B cell (primary cell): ENCODE measurements at regions of chr16 and their contacts with region 1.

Region 1: DNA sequence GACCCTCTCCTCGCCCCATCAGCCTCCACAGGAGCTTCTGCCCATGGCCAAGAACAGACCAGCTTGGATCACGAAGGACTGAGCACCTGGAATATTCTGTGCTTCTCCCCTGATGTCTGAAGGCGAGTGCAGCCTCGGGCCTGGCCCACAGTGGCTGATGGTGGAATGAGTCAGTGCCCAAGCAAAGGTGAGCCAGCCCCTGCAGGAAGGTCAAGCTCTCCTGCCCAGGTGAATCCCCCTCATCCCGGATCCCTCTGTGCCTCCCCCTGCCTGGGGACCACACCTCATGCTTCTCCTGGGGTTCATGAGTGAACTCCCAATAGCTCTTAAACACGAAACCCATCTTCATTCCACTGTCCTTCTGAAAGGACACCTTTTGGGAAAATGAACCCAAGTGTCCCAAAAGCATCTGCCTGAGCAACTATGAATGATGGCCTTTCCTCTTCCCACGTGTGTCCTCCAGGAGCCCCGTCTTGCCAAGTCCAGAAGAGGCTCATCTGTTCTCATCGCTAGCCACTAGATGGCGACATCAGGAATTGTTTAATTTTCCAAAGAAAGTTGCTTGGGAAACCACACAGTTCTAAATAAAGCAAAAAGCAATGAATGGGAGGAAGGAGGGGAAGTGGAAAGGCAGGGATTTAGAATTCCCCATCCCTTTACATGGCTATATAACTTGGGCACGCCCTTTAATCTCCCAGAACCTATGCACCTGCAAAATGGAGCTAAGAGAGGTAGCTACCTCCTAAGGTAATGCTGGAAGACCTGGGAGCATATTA is 9.2 kb upstream of the CDH5 start:
- DNase-seq: peak; percentile 41
- ATAC-seq: no peak
- H3K4me3 ChIP-seq: no peak overlapping the region
- H3K4me3 Mint-ChIP-seq: no peak overlapping the region
- H3K27ac ChIP-seq: no peak overlapping the region
- H3K27ac Mint-ChIP-seq: no peak overlapping the region
- H3K4me1 ChIP-seq: no peaks in the 10 kb centered on the region
- H3K4me1 Mint-ChIP-seq: peaks cover 2% of the 10 kb centered on the region
- H3K27me3 ChIP-seq: peaks cover 0 to 44% (median 3%) of the 10 kb centered on the region in 4 experiments
- H3K27me3 Mint-ChIP-seq: peaks cover 44% of the 10 kb centered on the region
- CTCF ChIP-seq: peak; percentile 67

Region 2: DNA sequence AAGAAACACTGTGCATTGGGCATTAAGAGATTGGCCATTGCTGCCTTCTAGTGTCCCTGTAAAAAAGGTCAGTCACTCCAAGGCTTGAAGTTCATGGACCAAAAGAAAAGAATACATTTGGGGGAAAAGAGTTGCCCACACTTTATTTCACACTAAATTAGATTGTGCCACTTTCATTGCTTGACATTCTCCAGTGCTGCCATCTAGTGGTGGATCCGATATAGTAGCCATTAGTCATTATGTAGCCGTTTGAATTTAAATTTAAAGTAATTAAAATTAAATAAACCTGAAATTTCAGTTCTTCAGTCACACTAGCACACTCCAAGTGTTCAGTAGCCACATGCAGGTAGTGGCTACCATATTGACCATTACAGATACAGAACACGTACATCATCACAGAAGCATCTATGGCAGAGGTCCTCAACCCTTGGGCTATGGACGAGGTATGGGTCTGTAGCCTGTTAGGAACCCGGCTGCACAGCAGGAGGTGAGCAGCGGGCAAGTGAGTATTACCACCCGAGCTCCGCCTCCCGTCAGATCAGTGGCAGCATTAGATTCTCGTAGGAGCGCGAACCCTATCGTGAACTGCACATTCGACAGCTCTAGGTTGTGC is 12.7 kb before region 1 on chr16:
- CTCF ChIA-PET with region 1: interaction called, 48 read pairs
- POLR2A ChIA-PET with region 1: no interaction called
- intact Hi-C with region 1: no loop called
- DNase-seq: peak; percentile 37
- ATAC-seq: no peak
- H3K4me3 ChIP-seq: no peak overlapping the region
- H3K4me3 Mint-ChIP-seq: no peak overlapping the region
- H3K27ac ChIP-seq: no peak overlapping the region
- H3K27ac Mint-ChIP-seq: no peak overlapping the region
- H3K4me1 ChIP-seq: no peaks in the 10 kb centered on the region
- H3K4me1 Mint-ChIP-seq: no peaks in the 10 kb centered on the region
- H3K27me3 ChIP-seq: peaks cover 0 to 9% (median 0%) of the 10 kb centered on the region in 4 experiments
- H3K27me3 Mint-ChIP-seq: peaks cover 45% of the 10 kb centered on the region
- CTCF ChIP-seq: peak; percentile 87